Posterior cingulate gyrus (tissue), 11 donors: ENCODE measurements at regions of chr11 and their contacts with region 1.

Region 1: GRCh38 chr11:12893787-12894672 is 115.1 kb upstream of the RASSF10 start:
- DNase-seq: peak; percentile 49 to 94 (median 78)

Region 2: DNA sequence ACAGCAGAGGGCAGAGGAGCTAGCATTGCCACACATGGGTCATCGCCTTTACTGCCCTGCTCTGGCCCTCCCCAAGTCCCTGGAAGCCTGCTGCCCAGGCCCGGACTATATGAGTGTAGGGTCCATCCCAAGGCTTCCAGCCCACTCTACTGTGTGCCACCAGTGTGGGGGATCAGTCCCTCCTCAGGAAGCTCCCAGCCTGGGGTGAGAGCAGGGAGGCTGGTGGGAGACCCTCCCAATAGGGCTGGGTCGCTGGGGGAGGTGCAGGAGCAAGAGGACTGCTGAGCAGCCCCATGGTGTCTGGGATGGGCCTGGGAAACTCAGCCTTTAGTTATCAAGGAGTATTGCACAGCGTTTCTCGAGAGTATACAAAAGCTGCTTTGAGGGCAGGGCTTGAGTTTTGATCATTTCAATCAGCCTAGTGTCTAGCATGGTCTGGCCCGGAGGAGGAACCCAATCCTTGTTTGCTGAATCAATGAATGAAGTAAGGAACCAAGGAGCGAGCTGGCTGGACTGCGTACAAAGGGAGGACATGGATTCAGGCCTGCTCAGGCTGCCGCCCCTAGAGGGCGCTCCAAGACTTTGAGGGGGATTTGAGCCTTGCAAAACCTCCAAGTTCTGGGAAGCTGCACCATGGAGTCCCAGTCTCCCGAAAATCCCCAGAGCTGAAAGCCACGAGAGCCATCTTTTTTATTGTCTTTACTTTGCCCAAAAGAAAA is 605.7 kb before region 1 on chr11:
- intact Hi-C with region 1: loop called (anchors 1 kb)
- DNase-seq: peak; percentile 70 to 97 (median 88)

Region 3: GRCh38 chr11:12599408-12600143 is 294.5 kb before region 1 on chr11:
- intact Hi-C with region 1: loop called (anchors 10 kb)
- DNase-seq: peak in 9 of 10 donors; percentile 25 to 92 (median 54)

Region 4: DNA sequence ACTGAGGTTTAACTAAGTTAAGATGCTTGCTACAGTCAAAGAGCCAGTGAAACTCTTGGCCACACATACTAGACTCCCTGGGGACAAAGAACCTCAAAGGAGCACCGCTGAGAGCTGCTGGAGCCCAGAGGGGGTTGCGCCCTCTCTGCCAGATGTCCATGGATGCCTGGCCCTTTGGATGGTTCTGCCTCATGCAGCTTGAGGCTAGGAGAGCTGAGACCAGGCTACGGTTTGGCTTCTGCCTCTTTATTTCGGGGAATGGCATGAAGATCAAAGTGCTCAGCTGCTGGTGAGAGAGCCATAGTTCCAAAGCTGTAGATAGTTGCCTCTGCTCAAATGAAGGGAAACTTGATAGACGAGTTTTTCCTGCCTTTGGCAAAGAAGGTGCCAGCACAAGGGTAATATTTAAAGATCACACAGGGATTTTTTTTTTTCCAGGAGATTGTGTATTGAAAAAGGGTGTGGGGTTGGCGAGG is 158.1 kb after region 1 on chr11:
- intact Hi-C with region 1: no loop called
- DNase-seq: no peak